A549 (cell line): ENCODE measurements at regions of chr19 and their contacts with region 1.

Region 1: DNA sequence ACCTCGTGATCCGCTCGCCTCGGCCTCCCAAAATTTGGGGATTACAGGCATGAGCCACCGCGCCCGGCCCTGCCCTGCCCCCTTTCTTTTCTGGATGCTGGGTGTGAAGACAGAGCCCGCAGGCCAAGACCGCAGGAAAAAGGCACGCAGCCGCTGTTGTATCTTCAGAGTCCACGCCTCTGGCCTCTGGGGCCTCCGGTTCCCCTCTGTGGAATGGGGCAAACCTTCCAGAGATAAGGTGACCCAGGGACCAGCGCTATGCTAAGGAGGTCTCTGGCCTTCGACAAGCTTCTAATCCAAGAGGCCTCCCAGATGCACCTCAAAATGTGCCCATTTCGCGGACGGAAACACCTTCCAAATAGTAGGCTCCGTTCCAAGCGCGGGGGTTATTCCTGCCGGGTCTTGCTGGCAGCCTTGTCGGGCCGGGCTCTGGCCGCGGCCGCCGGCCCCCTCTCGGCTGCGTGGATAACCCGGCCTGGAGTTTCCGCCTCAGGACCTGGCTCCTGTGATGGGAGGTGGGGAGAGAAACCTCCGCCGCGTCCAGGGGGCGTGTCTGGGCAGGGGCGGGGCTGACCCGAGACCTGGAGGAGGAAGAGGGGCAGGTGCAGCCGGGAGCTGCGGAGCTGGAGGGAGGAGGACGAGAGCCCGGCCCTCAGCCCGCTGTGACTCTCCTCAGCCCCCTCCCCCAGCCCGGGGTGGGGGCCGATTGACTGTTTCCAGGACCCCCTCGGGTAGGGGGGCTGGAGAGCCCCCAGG is 13.1 kb downstream of the TJP3 start:
- DNase-seq: peak; percentile 68 to 91
- ATAC-seq: peak; percentile 75 to 78
- H3K4me3 ChIP-seq: peak overlapping the region; percentile 38
- H3K27ac ChIP-seq: peak overlapping the region; percentile 51 to 77; a peak in 4 of 6 replicates
- H3K4me1 ChIP-seq: peaks cover 35% of the 10 kb centered on the region
- CTCF ChIP-seq: no peak
- EP300 ChIP-seq: no peak
- POLR2A ChIP-seq: no peak
- RAD21 ChIP-seq: no peak

Region 2: DNA sequence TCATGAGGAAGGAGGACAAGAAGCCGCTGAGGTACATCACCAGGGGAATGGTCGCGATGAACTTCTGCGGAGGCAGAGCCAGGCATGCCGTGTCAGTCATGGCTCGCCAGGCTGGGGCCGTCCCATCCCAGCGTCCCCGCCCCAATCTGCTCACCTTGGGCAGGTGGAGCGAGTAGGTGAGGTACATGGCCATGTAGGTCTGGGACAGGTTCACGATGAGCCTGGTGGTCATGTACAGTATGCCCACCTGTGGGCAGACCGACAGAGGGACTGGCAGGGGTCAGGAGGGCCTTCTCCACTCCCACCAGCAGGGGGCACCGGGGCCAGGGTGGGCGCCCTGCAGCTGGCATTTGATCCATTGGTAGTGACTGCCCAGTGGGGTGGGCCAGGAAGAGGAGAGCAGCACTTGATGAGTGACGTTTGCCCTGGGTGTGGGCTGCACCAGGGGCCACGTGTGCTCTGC is 174.0 kb before region 1 on chr19:
- CTCF ChIA-PET with region 1: no interaction called
- POLR2A ChIA-PET with region 1: no interaction called
- DNase-seq: no peak
- ATAC-seq: peak; percentile 16 to 49; a peak in 3 of 6 replicates
- H3K4me3 ChIP-seq: no peak overlapping the region
- H3K27ac ChIP-seq: no peak overlapping the region
- H3K4me1 ChIP-seq: no peaks in the 10 kb centered on the region
- CTCF ChIP-seq: peak; percentile 32; the same call in 2 of the 3 replicates
- EP300 ChIP-seq: no peak
- POLR2A ChIP-seq: no peak
- RAD21 ChIP-seq: peak in 1 of 2 experiments; percentile 21; a peak in 1 of 5 replicates

Region 3: DNA sequence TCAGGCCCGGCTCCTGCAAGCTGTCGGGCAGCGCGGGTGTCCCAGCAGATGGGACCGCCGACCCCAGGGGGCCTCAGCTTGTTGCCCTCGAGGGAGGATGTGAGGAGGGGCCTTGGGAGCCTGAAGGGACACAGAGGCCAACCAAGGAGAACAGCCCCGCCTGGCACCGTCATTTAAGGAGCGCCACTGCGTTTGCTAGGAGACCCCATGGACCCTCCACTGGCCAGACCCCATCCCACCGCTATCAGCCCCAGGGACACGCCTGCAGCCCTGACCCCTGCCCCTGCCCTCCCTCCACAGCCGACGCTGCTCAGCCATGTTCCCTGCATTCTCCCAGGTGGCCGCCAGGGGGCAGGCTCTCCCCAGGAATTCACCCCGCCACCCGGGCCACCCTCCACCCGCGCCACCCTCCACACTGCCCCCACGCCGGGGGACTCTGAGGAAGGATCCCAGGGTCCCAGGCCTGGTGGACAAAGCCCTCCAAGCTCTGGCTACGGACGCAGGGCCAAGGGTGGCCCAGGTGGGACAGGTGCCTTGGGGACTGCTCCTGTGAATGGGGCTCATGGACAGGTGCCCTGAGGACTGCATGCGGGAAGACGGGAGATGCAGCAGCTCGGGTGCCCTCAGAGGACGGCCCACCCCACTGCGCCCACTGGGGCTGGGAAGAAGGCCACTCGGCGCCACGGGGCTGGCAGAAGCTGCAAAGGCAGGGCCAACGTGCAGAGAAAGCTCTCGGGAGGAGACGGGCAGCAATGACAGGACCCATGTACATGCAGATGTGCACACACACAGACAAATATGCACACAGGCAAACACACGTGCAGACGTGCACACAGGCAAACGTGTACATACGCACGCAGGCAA is 55.4 kb before region 1 on chr19:
- CTCF ChIA-PET with region 1: interaction called, 30 read pairs
- POLR2A ChIA-PET with region 1: no interaction called
- DNase-seq: peak in 1 of 2 experiments; percentile 57
- ATAC-seq: peak; percentile 67 to 81; a peak in 5 of 6 replicates
- H3K4me3 ChIP-seq: no peak overlapping the region
- H3K27ac ChIP-seq: no peak overlapping the region
- H3K4me1 ChIP-seq: peaks cover 13% of the 10 kb centered on the region
- CTCF ChIP-seq: peak; percentile 74
- EP300 ChIP-seq: no peak
- POLR2A ChIP-seq: no peak
- RAD21 ChIP-seq: peak; percentile 78 to 83

Region 4: GRCh38 chr19:3700221-3701032 is 20.9 kb before region 1 on chr19 and contains the start of gene PIP5K1C:
- CTCF ChIA-PET with region 1: interaction called, 57 read pairs
- POLR2A ChIA-PET with region 1: no interaction called
- DNase-seq: peak; percentile 33 to 83
- ATAC-seq: peak; percentile 85 to 89
- H3K4me3 ChIP-seq: peak within 1 kb of the TSS; percentile 95
- H3K27ac ChIP-seq: peak within 1 kb of the TSS; percentile 86 to 98
- H3K4me1 ChIP-seq: peaks cover 4% of the 10 kb centered on the region; the same call in 1 of the 3 replicates
- CTCF ChIP-seq: peak; percentile 66
- EP300 ChIP-seq: no peak
- POLR2A ChIP-seq: peak; percentile 41
- RAD21 ChIP-seq: peak; percentile 47 to 49
- polyA plus RNA-seq, gene PIP5K1C: 2.6 and 3.5 TPM in 2 replicates

Region 5: GRCh38 chr19:3710265-3710812 is 11.0 kb before region 1 on chr19:
- CTCF ChIA-PET with region 1: interaction called, 57 read pairs
- POLR2A ChIA-PET with region 1: no interaction called
- DNase-seq: peak; percentile 82 to 93
- ATAC-seq: peak; percentile 83
- H3K4me3 ChIP-seq: no peak overlapping the region
- H3K27ac ChIP-seq: peak overlapping the region; percentile 61 to 83
- H3K4me1 ChIP-seq: peaks cover 60% of the 10 kb centered on the region
- CTCF ChIP-seq: no peak
- EP300 ChIP-seq: no peak
- POLR2A ChIP-seq: no peak
- RAD21 ChIP-seq: no peak